ENCODE measurements at regions of chr3 and their contacts with region 1.

Region 1: DNA sequence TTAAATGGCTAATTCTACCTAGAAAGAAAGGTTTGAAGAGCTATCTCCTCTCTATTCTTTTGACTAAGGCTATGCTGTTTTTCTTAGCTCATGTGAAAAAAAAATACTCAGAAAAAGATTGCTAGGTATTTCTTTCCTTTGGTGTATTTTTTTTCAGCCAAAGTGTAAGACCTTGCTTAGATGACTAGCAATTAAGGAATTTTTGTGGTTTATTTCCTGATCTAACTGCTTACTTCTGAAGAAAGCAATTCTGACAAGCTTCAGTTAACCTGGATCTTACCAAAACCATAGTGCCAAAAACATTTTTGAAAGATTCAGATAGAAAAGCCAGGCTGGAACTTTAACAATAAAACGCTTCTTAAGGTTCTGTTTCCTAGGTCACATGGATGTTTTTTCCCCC is 315.6 kb downstream of the SOX2 start:
- DNase-seq: no peak
- ATAC-seq: no peak
- H3K4me3 ChIP-seq: no peak overlapping the region
- H3K27ac ChIP-seq: no peak overlapping the region
- H3K4me1 ChIP-seq: no peaks in the 10 kb centered on the region
- H3K27me3 ChIP-seq: no peaks in the 10 kb centered on the region
- CTCF ChIP-seq: no peak

Region 2: DNA sequence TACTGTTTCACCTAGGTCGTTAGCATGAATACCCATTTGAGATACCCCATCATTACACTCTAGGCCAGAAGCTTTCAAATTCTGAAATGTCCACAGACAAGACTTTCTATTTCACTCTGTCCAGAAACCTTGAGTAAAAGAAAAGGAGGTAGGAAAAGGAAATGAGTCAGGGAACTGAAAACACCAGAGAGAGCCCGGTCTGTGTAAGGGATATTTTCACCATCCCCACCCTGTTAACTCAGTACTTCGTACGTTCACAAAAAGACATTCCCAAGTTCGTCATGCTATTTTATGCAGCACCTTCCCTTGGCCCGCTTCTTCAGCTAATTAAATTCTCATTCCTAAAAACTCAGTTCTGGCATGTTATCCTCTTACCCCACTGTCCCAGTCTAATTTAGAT is 405.0 kb before region 1 on chr3:
- intact Hi-C with region 1: no loop called
- DNase-seq: no peak
- ATAC-seq: no peak
- H3K4me3 ChIP-seq: no peak overlapping the region
- H3K27ac ChIP-seq: no peak overlapping the region
- H3K4me1 ChIP-seq: no peaks in the 10 kb centered on the region
- H3K27me3 ChIP-seq: no peaks in the 10 kb centered on the region
- CTCF ChIP-seq: no peak

Region 3: GRCh38 chr3:182216311-182216970 is 189.1 kb after region 1 on chr3:
- intact Hi-C with region 1: loop called (anchors 5 kb)
- DNase-seq: no peak
- ATAC-seq: no peak
- H3K4me3 ChIP-seq: no peak overlapping the region
- H3K27ac ChIP-seq: no peak overlapping the region
- H3K4me1 ChIP-seq: no peaks in the 10 kb centered on the region
- H3K27me3 ChIP-seq: no peaks in the 10 kb centered on the region
- CTCF ChIP-seq: no peak